ENCODE measurements at regions of chr1 and their contacts with region 1.

Region 1: DNA sequence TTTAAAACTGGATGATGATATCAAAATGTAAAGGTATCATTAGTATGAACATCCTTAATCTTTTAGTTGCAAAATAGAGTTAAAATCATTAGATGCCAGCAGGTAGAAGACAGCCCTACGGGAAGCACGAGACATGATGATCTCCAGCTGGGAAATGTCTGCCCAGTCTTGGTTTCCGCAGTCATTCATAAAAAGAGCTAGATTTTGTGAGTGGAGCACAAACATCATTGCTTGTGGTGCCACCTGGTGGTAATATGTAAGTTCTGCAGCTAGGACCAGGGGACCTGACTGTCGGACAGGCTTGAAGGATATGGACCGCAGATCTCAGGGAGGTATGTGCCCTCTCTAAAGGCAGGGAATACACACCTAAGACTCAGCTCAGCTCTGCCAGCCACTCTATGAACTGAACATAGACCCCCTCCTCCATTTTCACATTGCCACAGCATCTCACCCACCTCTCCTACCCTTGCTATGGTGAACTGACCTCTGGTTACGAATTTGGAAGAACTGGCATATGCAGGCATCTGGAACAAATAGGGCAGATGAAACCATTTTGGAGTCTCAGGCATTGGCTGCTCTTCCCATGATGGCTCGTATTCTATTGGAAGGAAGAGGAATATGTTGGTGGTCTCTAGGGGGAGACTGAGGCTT is 9.2 kb downstream of the FCMR start:
- DNase-seq: peak; percentile 59
- H3K4me3 ChIP-seq: no peak overlapping the region
- H3K27ac ChIP-seq: no peak overlapping the region
- H3K4me1 ChIP-seq: peaks cover 22% of the 10 kb centered on the region
- H3K27me3 ChIP-seq: no peaks in the 10 kb centered on the region
- CTCF ChIP-seq: peak; percentile 77 to 81

Region 2: GRCh38 chr1:206612129-206612876 is 300.3 kb before region 1 on chr1 and contains the start of gene EIF2D:
- CTCF ChIA-PET with region 1: interaction called, 6 read pairs
- dilution Hi-C with region 1: no loop called
- in situ Hi-C with region 1: no loop called
- intact Hi-C with region 1: loop called (anchors 1 kb)
- DNase-seq: peak; percentile 87
- H3K4me3 ChIP-seq: peak within 1 kb of the TSS; percentile 74 to 93 (median 87)
- H3K27ac ChIP-seq: peak within 1 kb of the TSS; percentile 86
- H3K4me1 ChIP-seq: peaks cover 9% of the 10 kb centered on the region
- H3K27me3 ChIP-seq: no peaks in the 10 kb centered on the region
- CTCF ChIP-seq: peak; percentile 74 to 98
- total RNA-seq, gene EIF2D: 43.0 to 44.0 TPM

Region 3: GRCh38 chr1:206734499-206735142 is 177.9 kb before region 1 on chr1:
- CTCF ChIA-PET with region 1: interaction called, 14 read pairs
- dilution Hi-C with region 1: loop called (anchors 5 kb)
- in situ Hi-C with region 1: loop called (anchors 5 kb)
- intact Hi-C with region 1: loop called (anchors 1 kb)
- DNase-seq: no peak
- H3K4me3 ChIP-seq: no peak overlapping the region
- H3K27ac ChIP-seq: no peak overlapping the region
- H3K4me1 ChIP-seq: peaks cover 4% of the 10 kb centered on the region
- H3K27me3 ChIP-seq: no peaks in the 10 kb centered on the region
- CTCF ChIP-seq: peak; percentile 79 to 87

Region 4: GRCh38 chr1:206872139-206872538 is 40.4 kb before region 1 on chr1:
- CTCF ChIA-PET with region 1: interaction called, 8 read pairs
- dilution Hi-C with region 1: loop called (anchors 5 kb)
- in situ Hi-C with region 1: no loop called
- intact Hi-C with region 1: no loop called
- DNase-seq: no peak
- H3K4me3 ChIP-seq: no peak overlapping the region
- H3K27ac ChIP-seq: no peak overlapping the region
- H3K4me1 ChIP-seq: peaks cover 30% of the 10 kb centered on the region
- H3K27me3 ChIP-seq: no peaks in the 10 kb centered on the region
- CTCF ChIP-seq: no peak

Region 5: DNA sequence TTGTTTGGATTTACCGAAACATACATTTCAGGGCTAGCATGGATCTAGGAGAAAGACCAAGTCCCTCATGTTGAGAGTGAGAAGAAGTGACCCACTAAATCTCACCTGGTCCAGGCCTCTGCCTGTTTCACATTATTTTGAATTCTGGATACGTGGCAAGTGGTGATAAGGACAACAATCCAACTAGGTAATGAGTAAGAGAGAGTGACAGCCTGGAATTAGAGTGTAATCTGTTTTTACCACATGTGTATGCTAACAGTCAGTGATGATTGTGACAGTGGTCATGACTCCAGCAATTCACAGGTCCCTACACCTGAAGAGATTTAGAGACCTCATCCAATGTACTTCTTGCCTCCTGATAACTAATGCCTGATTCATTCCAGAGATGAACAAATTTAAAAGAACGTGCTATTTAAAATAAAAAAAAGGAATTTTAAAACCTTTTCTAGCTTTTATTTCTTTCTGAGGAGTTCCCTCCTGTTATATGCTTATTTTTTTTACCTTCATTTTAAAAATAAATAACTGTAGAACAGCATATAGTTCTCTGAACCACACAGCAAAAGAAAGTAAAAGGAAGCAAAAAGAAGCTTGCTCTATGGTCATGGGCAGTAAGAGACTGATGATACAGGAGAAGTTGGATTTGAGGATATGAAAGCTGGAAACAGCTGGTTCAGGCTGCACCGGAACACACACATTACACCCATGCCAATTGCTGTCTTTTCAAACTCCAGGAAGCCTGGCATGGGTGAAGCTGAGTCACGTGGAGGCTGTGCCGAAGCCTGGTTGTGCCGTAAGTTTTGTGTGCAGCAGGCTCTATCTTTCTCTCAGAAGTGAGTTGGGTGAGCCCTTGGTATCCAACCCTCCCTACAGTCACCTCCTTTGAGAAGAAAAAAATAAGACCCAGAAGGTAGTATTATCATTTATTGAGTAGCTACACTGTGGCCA is 105.3 kb after region 1 on chr1:
- CTCF ChIA-PET with region 1: no interaction called
- dilution Hi-C with region 1: no loop called
- in situ Hi-C with region 1: no loop called
- intact Hi-C with region 1: loop called (anchors 1 kb)
- DNase-seq: peak; percentile 78
- H3K4me3 ChIP-seq: no peak overlapping the region
- H3K27ac ChIP-seq: peak overlapping the region; percentile 100
- H3K4me1 ChIP-seq: peaks cover 59% of the 10 kb centered on the region
- H3K27me3 ChIP-seq: no peaks in the 10 kb centered on the region
- CTCF ChIP-seq: no peak

Region 6: GRCh38 chr1:207499573-207499972 is 587.0 kb after region 1 on chr1:
- CTCF ChIA-PET with region 1: no interaction called
- dilution Hi-C with region 1: no loop called
- in situ Hi-C with region 1: no loop called
- intact Hi-C with region 1: loop called (anchors 1 kb)
- DNase-seq: peak; percentile 47
- H3K4me3 ChIP-seq: no peak overlapping the region
- H3K27ac ChIP-seq: no peak overlapping the region
- H3K4me1 ChIP-seq: peaks cover 7% of the 10 kb centered on the region
- H3K27me3 ChIP-seq: peaks cover 13% of the 10 kb centered on the region
- CTCF ChIP-seq: peak; percentile 70 to 81

Region 7: DNA sequence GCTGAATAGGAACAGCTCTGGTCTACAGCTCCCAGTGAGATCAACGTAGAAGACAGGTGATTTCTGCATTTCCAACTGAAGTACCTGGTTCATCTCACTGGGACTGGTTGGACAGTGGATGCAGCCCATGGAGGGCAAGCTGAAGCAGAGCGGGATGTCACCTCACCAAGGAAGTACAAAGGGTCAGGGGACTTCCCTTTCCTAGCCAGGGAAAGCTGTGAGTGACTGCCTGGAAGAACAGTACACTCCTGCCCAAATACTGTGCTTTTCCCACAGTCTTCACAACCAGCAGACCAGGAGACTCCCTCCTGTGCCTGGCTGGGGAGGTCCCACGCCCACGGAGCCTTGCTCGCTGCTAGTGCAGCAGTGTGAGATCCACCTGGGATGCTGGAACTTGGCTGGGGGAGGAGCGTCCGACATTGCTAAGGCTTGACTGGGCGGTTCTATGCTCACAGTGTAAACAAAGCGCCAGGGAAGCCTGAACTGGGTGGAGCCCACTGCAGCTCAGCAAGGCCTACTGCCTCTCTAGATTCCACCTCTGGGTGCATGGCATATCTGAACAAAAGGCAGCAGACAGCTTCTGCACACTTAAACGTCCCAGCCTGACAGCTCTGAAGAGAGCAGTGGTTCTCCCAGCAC is 747.1 kb after region 1 on chr1:
- CTCF ChIA-PET with region 1: no interaction called
- dilution Hi-C with region 1: no loop called
- in situ Hi-C with region 1: no loop called
- intact Hi-C with region 1: no loop called
- DNase-seq: no peak
- H3K4me3 ChIP-seq: no peak overlapping the region
- H3K27ac ChIP-seq: no peak overlapping the region
- H3K4me1 ChIP-seq: no peaks in the 10 kb centered on the region
- H3K27me3 ChIP-seq: no peaks in the 10 kb centered on the region
- CTCF ChIP-seq: no peak